ENCODE measurements at regions of chr3 and their contacts with region 1.

Region 1: DNA sequence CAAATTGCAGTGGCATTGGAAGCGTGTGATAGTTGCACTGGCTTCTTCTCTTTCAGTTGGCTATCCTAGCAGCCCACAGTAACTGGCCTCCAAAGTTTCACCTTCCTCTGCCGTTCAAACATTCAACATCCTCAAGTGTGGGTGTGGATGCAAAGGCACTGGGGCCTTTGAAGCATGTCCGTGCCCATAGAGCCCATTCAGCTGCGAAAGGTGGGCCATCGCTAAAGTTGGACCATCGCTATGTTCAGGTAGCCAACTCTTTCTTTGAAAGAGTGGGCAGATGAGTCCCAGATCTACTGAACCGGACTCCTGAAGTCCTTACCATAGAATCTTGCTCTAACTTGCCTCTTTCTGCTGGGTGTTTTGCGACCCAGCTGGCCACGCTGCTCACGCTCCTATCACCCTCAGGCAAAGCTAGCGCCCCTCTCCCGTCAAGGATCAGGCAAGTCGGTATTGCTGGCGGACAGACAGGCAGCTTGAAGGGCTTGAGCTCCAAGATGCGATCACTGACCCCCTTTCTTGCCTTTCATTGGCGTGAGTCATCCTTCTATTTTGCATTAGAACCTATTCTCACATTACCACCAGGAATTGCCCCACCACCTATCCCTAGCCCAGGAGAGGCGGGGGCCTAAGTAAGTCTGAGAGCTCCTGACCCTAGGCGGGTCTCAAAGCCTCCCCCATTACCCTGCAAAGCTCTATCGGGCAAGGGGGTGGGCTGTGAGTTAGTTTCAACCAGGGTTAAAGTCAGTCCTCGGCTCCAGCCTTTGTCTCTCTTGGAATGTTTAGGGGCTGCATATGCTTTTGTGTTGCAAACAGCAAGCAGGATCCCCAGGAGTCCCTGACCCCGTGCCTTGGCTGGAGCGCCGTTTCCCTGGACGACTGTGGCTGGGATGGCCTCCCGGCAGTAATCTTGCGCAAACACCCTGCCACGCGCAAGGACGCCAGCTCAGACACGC is 28.7 kb downstream of the ZIC4 start:
- DNase-seq: no peak
- H3K4me3 ChIP-seq: no peak overlapping the region
- H3K27ac ChIP-seq: no peak overlapping the region
- H3K4me1 ChIP-seq: no peaks in the 10 kb centered on the region
- H3K27me3 ChIP-seq: peaks cover 45 to 100% (median 88%) of the 10 kb centered on the region in 3 donors
- CTCF ChIP-seq: no peak
- EP300 ChIP-seq: no peak
- POLR2A ChIP-seq: no peak

Region 2: DNA sequence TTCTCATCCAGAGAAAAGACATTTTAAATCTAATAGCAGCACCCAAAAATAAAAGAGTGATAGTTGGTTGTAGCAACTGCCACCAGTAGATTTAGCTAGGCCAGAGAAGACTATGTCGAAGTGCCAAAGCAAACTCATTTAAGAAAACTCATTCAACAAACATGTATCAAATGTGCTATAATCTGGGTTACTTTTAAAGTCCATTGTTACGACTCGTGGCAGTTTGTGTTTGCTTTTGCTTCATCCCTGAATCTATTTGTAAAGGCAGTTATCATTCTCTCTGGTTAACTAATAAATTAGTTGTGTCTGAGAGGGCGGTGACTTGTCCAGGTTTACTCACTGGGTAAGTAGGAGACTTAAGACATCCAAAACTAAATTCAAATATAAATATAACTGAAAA is 130.8 kb before region 1 on chr3:
- intact Hi-C with region 1: no loop called
- DNase-seq: no peak
- H3K4me3 ChIP-seq: no peak overlapping the region
- H3K27ac ChIP-seq: no peak overlapping the region
- H3K4me1 ChIP-seq: no peaks in the 10 kb centered on the region
- H3K27me3 ChIP-seq: no peaks in the 10 kb centered on the region
- CTCF ChIP-seq: no peak
- EP300 ChIP-seq: no peak
- POLR2A ChIP-seq: no peak

Region 3: DNA sequence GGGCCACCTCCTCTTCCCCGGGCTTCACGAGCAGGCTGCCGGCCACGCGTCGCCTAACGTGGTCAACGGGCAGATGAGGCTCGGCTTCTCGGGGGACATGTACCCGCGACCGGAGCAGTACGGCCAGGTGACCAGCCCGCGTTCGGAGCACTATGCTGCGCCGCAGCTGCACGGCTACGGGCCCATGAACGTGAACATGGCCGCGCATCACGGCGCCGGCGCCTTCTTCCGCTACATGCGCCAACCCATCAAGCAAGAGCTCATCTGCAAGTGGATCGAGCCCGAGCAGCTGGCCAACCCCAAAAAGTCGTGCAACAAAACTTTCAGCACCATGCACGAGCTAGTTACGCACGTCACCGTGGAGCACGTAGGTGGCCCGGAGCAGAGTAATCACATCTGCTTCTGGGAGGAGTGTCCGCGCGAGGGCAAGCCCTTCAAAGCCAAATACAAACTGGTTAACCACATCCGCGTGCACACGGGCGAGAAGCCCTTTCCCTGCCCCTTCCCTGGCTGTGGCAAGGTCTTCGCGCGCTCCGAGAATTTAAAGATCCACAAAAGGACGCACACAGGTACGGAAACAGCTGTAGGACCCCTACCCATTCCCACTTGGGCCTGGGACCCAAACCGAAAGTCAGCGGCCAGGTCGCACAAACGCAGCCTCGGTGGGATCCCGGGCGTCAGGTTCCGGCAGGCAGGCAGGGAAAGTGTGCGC is 33.0 kb after region 1 on chr3:
- intact Hi-C with region 1: loop called (anchors 5 kb)
- DNase-seq: no peak
- H3K4me3 ChIP-seq: peak overlapping the region in 3 of 4 donors; percentile 9 to 24 (median 13)
- H3K27ac ChIP-seq: no peak overlapping the region
- H3K4me1 ChIP-seq: peaks cover 0 to 43% (median 40%) of the 10 kb centered on the region in 4 donors
- H3K27me3 ChIP-seq: peaks cover 78 to 100% (median 100%) of the 10 kb centered on the region in 3 donors
- CTCF ChIP-seq: no peak
- EP300 ChIP-seq: no peak
- POLR2A ChIP-seq: no peak